Heart right ventricle (tissue), 16 donors: ENCODE measurements at regions of chr9 and their contacts with region 1.

Region 1: GRCh38 chr9:34451545-34451944 is 6.8 kb downstream of the FAM219A start:
- DNase-seq: no peak
- ATAC-seq: no peak
- H3K4me3 ChIP-seq: no peak overlapping the region
- H3K27ac ChIP-seq: peak overlapping the region; percentile 23 to 93 (median 58)
- H3K4me1 ChIP-seq: peaks cover 20 to 100% (median 85%) of the 10 kb centered on the region in 9 donors
- H3K27me3 ChIP-seq: no peaks in the 10 kb centered on the region
- CTCF ChIP-seq: no peak

Region 2: GRCh38 chr9:34413231-34413852 is 38.2 kb before region 1 on chr9:
- intact Hi-C with region 1: loop called in 1 of 10 experiments (anchors 2 kb)
- DNase-seq: peak; percentile 13 to 40
- ATAC-seq: peak in 2 of 8 donors; percentile 59 to 64
- H3K4me3 ChIP-seq: no peak overlapping the region
- H3K27ac ChIP-seq: no peak overlapping the region
- H3K4me1 ChIP-seq: peaks cover 0 to 10% (median 0%) of the 10 kb centered on the region in 9 donors
- H3K27me3 ChIP-seq: no peaks in the 10 kb centered on the region
- CTCF ChIP-seq: no peak